SK-MEL-5 (cell line): ENCODE measurements at regions of chr18 and their contacts with region 1.

Region 1: GRCh38 chr18:13216092-13216582 is 2.4 kb upstream of the LDLRAD4 start:
- DNase-seq: peak; percentile 85

Region 2: DNA sequence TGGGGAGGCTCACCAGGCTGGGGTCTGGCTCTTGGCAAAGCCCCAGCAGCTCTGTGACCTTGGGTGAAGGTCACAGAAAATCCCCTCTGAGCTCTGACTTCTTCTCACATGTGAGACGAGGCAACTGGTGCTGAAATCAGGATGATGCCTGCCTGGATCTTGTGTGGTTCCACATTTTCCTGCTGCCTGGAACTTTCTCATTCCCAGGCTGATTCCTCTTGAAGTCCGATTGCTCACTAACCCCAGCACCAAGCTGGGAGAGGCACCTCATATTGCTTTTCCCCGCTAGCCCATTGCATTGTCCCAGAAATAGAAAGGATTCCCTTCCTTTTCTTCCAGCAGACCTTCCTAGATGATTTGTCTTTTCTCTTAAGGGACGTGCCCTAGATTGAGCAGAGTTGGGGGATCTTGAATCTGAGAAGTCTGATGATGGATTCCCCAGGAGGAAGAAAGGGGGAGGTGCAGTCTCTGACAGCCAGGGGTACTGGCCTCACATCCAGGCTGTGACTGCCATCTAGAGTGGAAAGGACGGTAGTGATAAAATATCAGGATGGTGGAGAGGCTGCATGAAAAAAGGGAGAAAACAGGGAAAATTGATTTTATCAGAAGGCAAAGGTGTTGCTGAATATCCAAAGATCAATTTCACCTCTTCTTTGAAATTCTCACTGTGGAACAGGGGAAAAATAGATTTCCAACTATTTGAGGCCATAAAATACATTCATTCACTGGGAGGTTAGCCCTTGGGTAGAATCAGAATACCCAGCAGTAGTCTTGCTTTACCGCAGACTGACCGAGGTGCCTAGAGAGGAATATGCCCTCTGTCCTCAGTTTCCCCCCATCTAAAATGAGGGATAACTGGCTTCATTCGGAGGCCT is 413.9 kb after region 1 on chr18:
- in situ Hi-C with region 1: loop called (anchors 25 kb)
- DNase-seq: peak; percentile 86